ENCODE measurements at regions of chr19 and their contacts with region 1.

Region 1: DNA sequence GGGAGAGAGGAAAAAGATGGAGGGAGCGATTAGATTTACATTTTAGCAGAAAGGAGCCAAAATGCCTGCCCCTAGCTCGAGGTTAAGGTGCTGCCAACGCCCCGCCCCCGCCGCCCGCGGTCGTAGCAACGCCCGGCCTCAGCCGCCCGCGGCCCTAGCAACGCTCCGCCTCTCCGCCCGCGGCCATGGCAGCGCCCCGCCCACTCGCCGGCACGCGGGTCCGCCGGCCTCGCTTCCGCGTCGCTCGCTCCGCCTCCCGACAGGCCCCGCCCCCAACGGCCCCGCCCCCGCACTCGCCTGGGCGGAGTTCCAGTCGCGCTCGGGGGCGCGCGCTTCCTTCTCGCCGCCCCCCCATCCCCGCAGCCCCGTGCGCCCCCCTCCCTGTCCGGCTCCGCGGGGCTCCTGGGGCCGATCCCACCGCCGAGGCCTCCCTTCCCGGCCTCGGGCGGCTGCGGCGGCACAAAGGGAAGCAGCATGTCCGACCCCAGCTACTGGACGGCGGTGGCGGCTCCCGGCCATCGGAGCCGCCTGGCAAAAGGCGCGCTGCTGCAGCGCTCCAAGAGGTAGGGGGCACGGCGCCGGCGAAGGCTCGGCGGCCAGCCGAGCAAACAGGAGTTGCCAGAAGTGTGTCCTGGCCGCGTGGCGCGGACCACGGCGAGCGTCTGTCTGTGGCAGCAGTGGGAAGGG is 20.3 kb downstream of the MAST3 start:
- DNase-seq: peak; percentile 54
- H3K4me3 ChIP-seq: peak overlapping the region; percentile 41 to 66 (median 66)
- H3K27ac ChIP-seq: no peak overlapping the region
- H3K4me1 ChIP-seq: peaks cover 21% of the 10 kb centered on the region
- H3K27me3 ChIP-seq: no peaks in the 10 kb centered on the region
- CTCF ChIP-seq: no peak

Region 2: GRCh38 chr19:18007044-18007916 is 110.6 kb before region 1 on chr19:
- CTCF ChIA-PET with region 1: no interaction called
- dilution Hi-C with region 1: no loop called
- in situ Hi-C with region 1: no loop called
- intact Hi-C with region 1: loop called (anchors 5 kb)
- DNase-seq: peak; percentile 69
- H3K4me3 ChIP-seq: peak overlapping the region; percentile 23 to 43 (median 39)
- H3K27ac ChIP-seq: peak overlapping the region; percentile 9
- H3K4me1 ChIP-seq: peaks cover 12% of the 10 kb centered on the region
- H3K27me3 ChIP-seq: no peaks in the 10 kb centered on the region
- CTCF ChIP-seq: peak; percentile 95 to 98

Region 3: DNA sequence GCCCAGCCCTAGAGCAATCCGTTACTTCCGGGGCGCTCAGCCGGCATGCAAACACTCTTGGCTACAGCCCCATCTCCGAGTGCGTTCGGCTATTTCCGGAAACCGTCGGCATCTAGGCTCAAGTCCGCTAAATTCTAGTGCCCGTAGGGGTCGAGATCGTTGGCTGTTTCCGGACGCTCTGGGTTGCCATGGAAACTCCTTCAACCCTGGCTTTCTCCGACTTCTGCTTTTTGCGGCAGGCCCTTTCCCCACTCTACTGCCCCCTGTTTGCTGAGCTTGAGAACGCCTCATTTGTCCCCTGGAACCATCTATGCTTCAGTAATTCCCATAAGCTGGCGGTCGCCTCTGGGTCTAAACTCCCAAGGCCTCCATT is 34.6 kb after region 1 on chr19:
- CTCF ChIA-PET with region 1: no interaction called
- dilution Hi-C with region 1: no loop called
- in situ Hi-C with region 1: loop called in 1 of 2 experiments (anchors 5 kb)
- intact Hi-C with region 1: loop called (anchors 1 kb)
- DNase-seq: peak; percentile 88
- H3K4me3 ChIP-seq: peak overlapping the region; percentile 47 to 59 (median 57)
- H3K27ac ChIP-seq: peak overlapping the region; percentile 93
- H3K4me1 ChIP-seq: peaks cover 38% of the 10 kb centered on the region
- H3K27me3 ChIP-seq: no peaks in the 10 kb centered on the region
- CTCF ChIP-seq: peak; percentile 39 to 61

Region 4: GRCh38 chr19:18167975-18168645 is 50.3 kb after region 1 on chr19:
- CTCF ChIA-PET with region 1: no interaction called
- dilution Hi-C with region 1: loop called (anchors 5 kb)
- in situ Hi-C with region 1: loop called in 1 of 2 experiments (anchors 10 kb)
- intact Hi-C with region 1: loop called (anchors 1 kb)
- DNase-seq: no peak
- H3K4me3 ChIP-seq: no peak overlapping the region
- H3K27ac ChIP-seq: no peak overlapping the region
- H3K4me1 ChIP-seq: no peaks in the 10 kb centered on the region
- H3K27me3 ChIP-seq: no peaks in the 10 kb centered on the region
- CTCF ChIP-seq: peak; percentile 66 to 76

Measured in mammary epithelial cell (primary cell).